IMR-90 (cell line): ENCODE measurements at regions of chr11 and their contacts with region 1.

Region 1: DNA sequence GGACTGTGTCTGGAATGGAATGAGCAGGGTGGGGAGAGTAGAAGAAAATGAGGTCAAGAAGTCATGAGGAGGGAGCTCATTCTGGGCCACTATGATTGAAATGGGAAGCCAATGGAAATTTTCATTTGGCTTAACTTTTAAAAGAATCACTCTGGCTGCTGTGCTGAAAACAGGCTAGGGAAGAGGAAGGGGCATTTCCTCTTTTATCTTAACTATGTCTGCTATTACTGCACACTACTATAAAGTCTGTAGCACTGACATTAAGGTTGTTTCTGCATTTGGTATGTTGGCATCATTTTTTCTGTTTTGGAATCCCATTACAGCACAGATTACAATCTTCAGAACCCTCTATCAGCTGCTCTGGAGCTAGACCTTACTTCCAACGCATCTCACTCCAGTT is 8.2 kb downstream of the PATL1 start:
- DNase-seq: no peak
- ATAC-seq: no peak
- H3K4me3 ChIP-seq: no peak overlapping the region
- H3K27ac ChIP-seq: no peak overlapping the region
- H3K4me1 ChIP-seq: no peaks in the 10 kb centered on the region
- H3K27me3 ChIP-seq: no peaks in the 10 kb centered on the region
- CTCF ChIP-seq: no peak
- POLR2A ChIP-seq: no peak
- RAD21 ChIP-seq: no peak

Region 2: DNA sequence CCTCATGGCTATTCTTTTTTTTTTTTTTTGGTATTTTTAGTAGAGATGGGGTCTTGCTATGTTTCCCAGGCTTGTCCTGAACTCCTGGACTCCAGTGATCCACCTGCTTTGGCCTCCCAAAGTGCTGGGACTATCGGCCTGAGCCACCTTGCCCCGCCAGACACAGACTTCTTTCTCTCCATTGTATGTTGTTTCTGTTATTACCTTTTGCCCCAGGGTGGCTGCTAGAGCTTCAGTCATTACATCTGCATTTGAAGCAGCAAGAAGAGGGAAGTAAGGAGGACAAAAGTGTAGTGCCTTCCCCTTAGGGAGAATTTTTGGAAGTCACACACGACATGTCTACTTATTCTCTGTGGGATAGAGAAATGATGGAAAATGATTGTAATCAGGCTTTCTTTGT is 34.9 kb before region 1 on chr11:
- CTCF ChIA-PET with region 1: no interaction called
- POLR2A ChIA-PET with region 1: no interaction called
- dilution Hi-C with region 1: no loop called
- in situ Hi-C with region 1: no loop called
- intact Hi-C with region 1: loop called (anchors 5 kb)
- DNase-seq: no peak
- ATAC-seq: no peak
- H3K4me3 ChIP-seq: no peak overlapping the region
- H3K27ac ChIP-seq: no peak overlapping the region
- H3K4me1 ChIP-seq: no peaks in the 10 kb centered on the region
- H3K27me3 ChIP-seq: no peaks in the 10 kb centered on the region
- CTCF ChIP-seq: no peak
- POLR2A ChIP-seq: no peak
- RAD21 ChIP-seq: no peak